ENCODE measurements at regions of chr17 and their contacts with region 1.

Region 1: DNA sequence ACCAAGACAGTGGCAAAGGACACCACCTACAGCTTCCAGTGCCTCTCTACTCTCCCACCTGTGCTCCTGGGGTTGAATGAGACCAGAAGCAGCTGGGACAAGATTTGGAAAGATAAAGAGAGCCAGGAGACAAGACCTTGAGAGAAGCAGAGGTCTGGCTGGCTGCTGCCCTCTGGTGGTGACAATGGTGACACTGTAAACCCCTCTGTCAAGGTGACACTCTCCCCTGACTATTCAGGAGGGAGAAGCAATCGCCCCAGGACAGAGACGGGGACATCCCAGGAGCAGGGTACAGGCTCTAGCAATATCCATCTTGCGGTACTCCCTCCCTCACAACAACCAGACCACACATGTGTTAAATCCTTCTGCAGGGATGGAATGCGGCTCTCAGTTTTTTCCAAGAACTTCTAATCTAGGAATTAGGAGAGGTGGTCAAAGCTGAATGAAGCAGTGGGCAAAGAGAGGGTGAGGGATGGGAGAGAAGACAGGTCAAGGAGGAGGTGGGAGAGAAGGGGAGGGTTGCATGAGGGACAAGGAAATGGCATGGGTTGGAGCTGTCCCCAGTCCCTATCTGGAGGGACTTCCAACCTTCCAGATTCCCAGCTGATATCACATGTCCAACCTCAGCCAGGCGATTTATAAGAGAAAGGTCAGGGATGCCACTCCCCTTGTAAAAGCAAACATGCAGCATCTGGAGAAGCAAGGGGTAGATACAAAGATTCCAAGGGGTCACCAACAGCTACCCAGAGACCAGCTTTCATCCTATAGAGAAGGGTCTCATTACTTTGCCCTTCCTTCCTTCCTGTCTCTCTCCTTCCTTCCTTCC is 2.9 kb downstream of the PHOSPHO1 start:
- DNase-seq: peak; percentile 85
- H3K4me3 Mint-ChIP-seq: no peak overlapping the region
- H3K27ac Mint-ChIP-seq: no peak overlapping the region
- H3K4me1 Mint-ChIP-seq: peaks cover 35% of the 10 kb centered on the region
- H3K27me3 Mint-ChIP-seq: peaks cover 30% of the 10 kb centered on the region

Region 2: DNA sequence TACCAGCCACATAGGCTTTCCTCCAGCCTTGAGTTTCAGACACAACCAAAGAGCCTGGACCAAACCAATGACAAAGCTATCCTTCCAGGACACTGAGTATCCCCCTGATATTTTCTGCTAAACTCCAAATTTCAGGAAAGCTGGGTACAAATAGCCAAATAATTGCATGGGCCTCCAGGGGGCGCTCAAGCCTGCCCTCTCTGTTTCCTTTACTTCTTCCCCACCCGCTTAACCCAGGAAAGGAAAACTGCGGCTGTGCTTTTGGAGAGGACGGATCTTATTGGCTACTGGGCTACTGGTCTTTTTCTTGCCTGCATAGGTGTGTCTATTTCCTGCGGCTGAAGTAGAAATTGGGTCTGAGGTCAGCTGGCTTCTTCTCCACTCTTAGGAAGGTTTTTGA is 47.3 kb before region 1 on chr17:
- CTCF ChIA-PET with region 1: interaction called, 13 read pairs
- POLR2A ChIA-PET with region 1: no interaction called
- DNase-seq: peak; percentile 65
- H3K4me3 Mint-ChIP-seq: no peak overlapping the region
- H3K27ac Mint-ChIP-seq: no peak overlapping the region
- H3K4me1 Mint-ChIP-seq: peaks cover 4% of the 10 kb centered on the region
- H3K27me3 Mint-ChIP-seq: peaks cover 11% of the 10 kb centered on the region

Region 3: GRCh38 chr17:49191917-49192741 is 35.5 kb before region 1 on chr17:
- CTCF ChIA-PET with region 1: interaction called, 13 read pairs
- POLR2A ChIA-PET with region 1: interaction called, 3 read pairs
- DNase-seq: peak; percentile 90
- H3K4me3 Mint-ChIP-seq: peak overlapping the region; percentile 85
- H3K27ac Mint-ChIP-seq: peak overlapping the region; percentile 98
- H3K4me1 Mint-ChIP-seq: peaks cover 48% of the 10 kb centered on the region
- H3K27me3 Mint-ChIP-seq: no peaks in the 10 kb centered on the region

Region 4: DNA sequence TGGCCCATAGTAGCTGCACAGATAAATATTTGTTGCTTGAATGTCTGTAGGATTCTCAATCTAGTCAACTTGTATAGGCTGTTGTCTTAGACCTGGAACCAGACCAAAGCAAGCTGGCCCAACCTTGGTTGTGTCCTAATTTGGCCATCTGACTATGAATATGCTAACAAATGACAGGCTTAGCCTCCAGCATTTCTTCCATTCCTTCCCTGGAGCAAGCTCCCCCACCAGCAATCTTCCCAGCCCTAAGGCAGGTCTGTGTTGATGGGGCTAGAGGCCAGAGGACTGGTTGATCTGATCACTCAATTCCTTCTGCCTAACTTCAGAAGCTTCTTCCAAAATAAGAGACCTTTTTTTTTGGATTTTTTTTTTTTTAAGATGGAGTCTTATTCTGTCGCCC is 12.3 kb after region 1 on chr17:
- CTCF ChIA-PET with region 1: interaction called, 10 read pairs
- POLR2A ChIA-PET with region 1: no interaction called
- DNase-seq: no peak
- H3K4me3 Mint-ChIP-seq: no peak overlapping the region
- H3K27ac Mint-ChIP-seq: no peak overlapping the region
- H3K4me1 Mint-ChIP-seq: no peaks in the 10 kb centered on the region
- H3K27me3 Mint-ChIP-seq: peaks cover 10% of the 10 kb centered on the region